Caco-2 (cell line): ENCODE measurements at regions of chr11 and their contacts with region 1.

Region 1: GRCh38 chr11:109946322-109946846 is 146.8 kb upstream of the ZC3H12C start:
- DNase-seq: peak; percentile 90 to 92
- H3K4me3 ChIP-seq: peak overlapping the region; percentile 17
- H3K4me3 Mint-ChIP-seq: peak overlapping the region; percentile 72
- H3K27ac Mint-ChIP-seq: peak overlapping the region; percentile 91
- H3K4me1 ChIP-seq: 0 out of 2 replicates have a peak, but pooled peaks cover 5% of the 10 kb centered on the region
- H3K4me1 Mint-ChIP-seq: peaks cover 9% of the 10 kb centered on the region
- H3K27me3 ChIP-seq: no peaks in the 10 kb centered on the region; the same call in 1 of the 2 replicates
- H3K27me3 Mint-ChIP-seq: peaks cover 14% of the 10 kb centered on the region
- CTCF ChIP-seq: peak; percentile 98 to 99

Region 2: DNA sequence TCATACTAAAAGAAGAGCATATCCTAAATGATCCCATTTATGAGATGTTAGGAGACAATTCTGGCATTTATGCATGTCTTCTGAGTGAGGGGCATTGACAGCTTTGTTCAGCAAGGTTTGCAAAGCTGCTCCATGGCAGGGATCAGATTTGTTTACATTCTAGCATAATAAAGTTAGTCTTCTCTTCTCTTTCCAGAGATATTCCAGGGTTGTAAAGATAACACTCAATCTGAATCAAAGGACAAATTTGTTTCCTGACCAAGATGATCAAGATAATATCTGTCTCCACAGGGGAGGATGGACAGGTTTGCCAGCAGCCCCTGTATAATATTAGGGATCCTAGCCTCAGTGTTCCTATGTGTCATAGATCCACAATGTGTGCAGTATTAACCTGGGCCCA is 69.3 kb after region 1 on chr11:
- CTCF ChIA-PET with region 1: no interaction called
- POLR2A ChIA-PET with region 1: no interaction called
- intact Hi-C with region 1: loop called (anchors 2 kb)
- DNase-seq: peak in 1 of 2 experiments; percentile 16
- H3K4me3 ChIP-seq: no peak overlapping the region
- H3K4me3 Mint-ChIP-seq: no peak overlapping the region
- H3K27ac Mint-ChIP-seq: no peak overlapping the region
- H3K4me1 ChIP-seq: no peaks in the 10 kb centered on the region
- H3K4me1 Mint-ChIP-seq: peaks cover 11% of the 10 kb centered on the region
- H3K27me3 ChIP-seq: no peaks in the 10 kb centered on the region
- H3K27me3 Mint-ChIP-seq: peaks cover 24% of the 10 kb centered on the region
- CTCF ChIP-seq: no peak

Region 3: GRCh38 chr11:110069158-110069737 is 122.9 kb after region 1 on chr11:
- CTCF ChIA-PET with region 1: no interaction called
- POLR2A ChIA-PET with region 1: no interaction called
- intact Hi-C with region 1: no loop called
- DNase-seq: no peak
- H3K4me3 ChIP-seq: no peak overlapping the region
- H3K4me3 Mint-ChIP-seq: no peak overlapping the region
- H3K27ac Mint-ChIP-seq: no peak overlapping the region
- H3K4me1 ChIP-seq: no peaks in the 10 kb centered on the region
- H3K4me1 Mint-ChIP-seq: no peaks in the 10 kb centered on the region
- H3K27me3 ChIP-seq: no peaks in the 10 kb centered on the region
- H3K27me3 Mint-ChIP-seq: no peaks in the 10 kb centered on the region
- CTCF ChIP-seq: no peak

Region 4: GRCh38 chr11:110092515-110093404 is 146.4 kb after region 1 on chr11 and contains the start of gene ZC3H12C:
- CTCF ChIA-PET with region 1: interaction called, 4 read pairs
- POLR2A ChIA-PET with region 1: interaction called, 4 read pairs
- intact Hi-C with region 1: loop called (anchors 1 kb)
- DNase-seq: peak; percentile 97
- H3K4me3 ChIP-seq: peak within 1 kb of the TSS; percentile 79
- H3K4me3 Mint-ChIP-seq: peak within 1 kb of the TSS; percentile 95
- H3K27ac Mint-ChIP-seq: peak within 1 kb of the TSS; percentile 94
- H3K4me1 ChIP-seq: peaks cover 17% of the 10 kb centered on the region
- H3K4me1 Mint-ChIP-seq: peaks cover 6% of the 10 kb centered on the region
- H3K27me3 ChIP-seq: 0 out of 2 replicates have a peak, but pooled peaks cover 1% of the 10 kb centered on the region
- H3K27me3 Mint-ChIP-seq: no peaks in the 10 kb centered on the region
- CTCF ChIP-seq: peak in 1 of 2 experiments; percentile 73
- total RNA-seq, gene ZC3H12C: 11.4 and 11.7 TPM in 2 replicates

Region 5: DNA sequence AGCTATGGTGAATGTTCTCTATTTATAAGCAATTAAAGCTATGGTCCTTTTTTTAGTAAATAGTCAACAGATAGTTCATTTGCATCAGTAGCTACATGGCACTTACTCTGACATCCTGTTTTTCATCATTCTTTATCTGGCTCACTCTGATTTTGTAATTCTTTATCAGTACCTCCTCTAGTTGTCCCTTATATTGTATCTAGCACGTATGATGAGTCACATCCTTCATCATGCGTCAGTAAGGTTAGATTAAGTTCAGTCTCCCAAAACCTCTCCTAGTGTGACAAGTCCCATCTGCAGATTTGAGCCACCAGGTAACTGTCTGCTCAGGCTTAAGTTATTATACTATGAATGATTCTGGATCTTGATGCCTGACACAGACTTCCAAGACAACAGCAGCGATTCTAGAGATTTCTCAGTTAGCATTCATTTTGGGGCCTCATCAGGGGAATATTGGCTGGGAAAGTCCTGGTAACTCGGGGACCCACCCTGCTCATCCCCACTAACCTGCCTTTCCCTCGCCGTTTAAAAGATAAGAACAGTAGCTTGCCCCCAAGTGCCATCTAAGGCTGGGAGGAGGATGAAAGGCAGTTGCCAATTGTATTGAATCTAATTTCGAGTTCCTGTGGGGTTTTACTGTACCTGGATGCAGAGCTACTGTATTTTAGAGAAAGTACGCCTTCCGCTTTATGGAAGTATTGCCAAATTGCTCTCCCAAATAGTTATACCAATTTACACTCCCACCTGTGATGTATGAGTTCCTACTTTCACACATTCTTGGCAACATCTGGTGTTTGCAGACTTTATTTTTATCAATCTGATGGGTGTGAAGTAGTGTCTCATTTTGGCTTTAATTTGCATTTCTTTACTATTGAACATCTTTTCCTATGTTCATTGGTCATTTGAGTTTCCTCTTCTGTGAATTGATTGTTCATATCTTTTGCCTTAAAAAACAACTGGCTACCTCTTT is 202.7 kb after region 1 on chr11:
- CTCF ChIA-PET with region 1: no interaction called
- POLR2A ChIA-PET with region 1: no interaction called
- intact Hi-C with region 1: no loop called
- DNase-seq: no peak
- H3K4me3 ChIP-seq: no peak overlapping the region
- H3K4me3 Mint-ChIP-seq: no peak overlapping the region
- H3K27ac Mint-ChIP-seq: no peak overlapping the region
- H3K4me1 ChIP-seq: no peaks in the 10 kb centered on the region
- H3K4me1 Mint-ChIP-seq: no peaks in the 10 kb centered on the region
- H3K27me3 ChIP-seq: no peaks in the 10 kb centered on the region
- H3K27me3 Mint-ChIP-seq: no peaks in the 10 kb centered on the region
- CTCF ChIP-seq: no peak

Region 6: DNA sequence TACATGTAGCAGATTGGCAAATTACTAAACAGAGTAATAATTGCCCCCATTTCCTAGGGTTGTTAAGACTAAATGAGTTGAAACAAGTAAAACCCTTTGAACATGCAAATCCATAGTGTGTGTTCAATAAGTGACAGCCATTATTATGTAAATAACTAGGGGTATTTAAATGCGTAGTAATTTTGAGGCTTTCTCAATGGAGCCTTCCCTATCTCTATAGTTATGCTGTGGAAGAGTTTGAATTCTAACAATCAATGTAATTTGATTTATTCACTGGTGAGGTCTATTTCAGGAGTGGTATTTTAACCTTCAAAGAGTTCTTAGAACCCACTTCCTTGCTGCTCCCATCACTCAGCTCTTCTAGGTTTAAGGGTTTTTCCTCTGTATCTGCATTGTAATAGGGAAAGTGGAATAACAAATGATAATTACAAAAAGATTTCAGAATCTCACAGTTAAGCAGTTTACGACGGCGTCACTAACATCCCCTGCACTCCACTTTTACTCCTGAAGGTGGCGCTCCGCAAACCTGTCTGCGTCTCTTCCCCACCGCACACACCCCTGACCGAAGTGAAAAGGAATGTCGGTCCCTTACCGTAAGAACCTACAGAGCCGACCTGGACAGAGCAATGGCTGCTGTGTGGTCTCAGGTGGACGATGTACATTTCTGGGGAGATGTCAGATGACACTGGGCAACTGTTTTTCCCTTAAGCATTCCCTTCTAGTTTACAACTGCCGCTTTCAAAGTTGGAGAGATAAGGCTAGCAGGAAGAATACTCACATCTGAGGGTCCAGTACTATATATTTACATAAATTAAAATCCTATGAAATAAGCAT is 227.6 kb after region 1 on chr11:
- CTCF ChIA-PET with region 1: no interaction called
- POLR2A ChIA-PET with region 1: no interaction called
- intact Hi-C with region 1: loop called (anchors 1 kb)
- DNase-seq: peak; percentile 70
- H3K4me3 ChIP-seq: no peak overlapping the region
- H3K4me3 Mint-ChIP-seq: no peak overlapping the region
- H3K27ac Mint-ChIP-seq: no peak overlapping the region
- H3K4me1 ChIP-seq: no peaks in the 10 kb centered on the region
- H3K4me1 Mint-ChIP-seq: no peaks in the 10 kb centered on the region
- H3K27me3 ChIP-seq: no peaks in the 10 kb centered on the region
- H3K27me3 Mint-ChIP-seq: no peaks in the 10 kb centered on the region
- CTCF ChIP-seq: peak; percentile 79

Region 7: GRCh38 chr11:110251837-110252236 is 305.5 kb after region 1 on chr11:
- CTCF ChIA-PET with region 1: no interaction called
- POLR2A ChIA-PET with region 1: no interaction called
- intact Hi-C with region 1: loop called (anchors 1 kb)
- DNase-seq: no peak
- H3K4me3 ChIP-seq: no peak overlapping the region
- H3K4me3 Mint-ChIP-seq: no peak overlapping the region
- H3K27ac Mint-ChIP-seq: no peak overlapping the region
- H3K4me1 ChIP-seq: no peaks in the 10 kb centered on the region
- H3K4me1 Mint-ChIP-seq: no peaks in the 10 kb centered on the region
- H3K27me3 ChIP-seq: no peaks in the 10 kb centered on the region
- H3K27me3 Mint-ChIP-seq: no peaks in the 10 kb centered on the region
- CTCF ChIP-seq: no peak

Region 8: GRCh38 chr11:110429731-110430266 is 483.4 kb after region 1 on chr11 and contains the start of gene FDX1:
- CTCF ChIA-PET with region 1: interaction called, 6 read pairs
- POLR2A ChIA-PET with region 1: interaction called, 3 read pairs
- intact Hi-C with region 1: loop called (anchors 1 kb)
- DNase-seq: peak; percentile 93 to 96
- H3K4me3 ChIP-seq: peak within 1 kb of the TSS; percentile 61
- H3K4me3 Mint-ChIP-seq: peak within 1 kb of the TSS; percentile 100
- H3K27ac Mint-ChIP-seq: peak within 1 kb of the TSS; percentile 99
- H3K4me1 ChIP-seq: peaks cover 38% of the 10 kb centered on the region
- H3K4me1 Mint-ChIP-seq: peaks cover 51% of the 10 kb centered on the region
- H3K27me3 ChIP-seq: no peaks in the 10 kb centered on the region
- H3K27me3 Mint-ChIP-seq: no peaks in the 10 kb centered on the region
- CTCF ChIP-seq: peak; percentile 42 to 62
- total RNA-seq, gene FDX1: 29.5 and 29.9 TPM in 2 replicates